ENCODE measurements at regions of chr2 and their contacts with region 1.

Region 1: GRCh38 chr2:120735746-120736170 is at the start of gene GLI2:
- DNase-seq: peak; percentile 63 to 85
- H3K4me3 ChIP-seq: peak within 1 kb of the TSS; percentile 63
- H3K27ac ChIP-seq: no peak within 1 kb of the TSS
- H3K4me1 ChIP-seq: peaks cover 15% of the 10 kb centered on the region
- H3K27me3 ChIP-seq: peaks cover 76% of the 10 kb centered on the region
- CTCF ChIP-seq: peak; percentile 79
- total RNA-seq, gene GLI2: 11.6 and 14.6 TPM in 2 replicates

Region 2: DNA sequence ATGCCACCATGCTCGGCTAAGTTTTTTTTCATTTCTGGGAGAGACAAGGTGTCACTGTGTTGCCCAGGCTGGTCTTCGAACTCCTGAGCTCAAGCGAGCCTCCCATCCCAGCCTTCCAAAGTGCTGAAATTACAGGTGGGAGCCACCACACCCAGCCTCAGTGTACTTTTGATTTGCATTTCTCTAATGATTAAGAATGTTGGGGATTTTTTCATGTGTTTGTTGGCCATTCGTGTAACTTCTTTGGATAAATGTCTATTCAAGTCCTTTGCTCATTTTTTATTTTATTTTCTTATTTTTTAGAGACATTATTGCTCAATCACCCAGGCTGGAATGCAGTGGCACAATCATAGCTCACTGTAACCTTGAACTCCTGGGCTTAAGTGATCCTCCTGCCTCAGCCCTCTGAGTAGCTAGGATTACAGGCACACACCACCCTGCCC is 585.7 kb before region 1 on chr2:
- CTCF ChIA-PET with region 1: no interaction called
- POLR2A ChIA-PET with region 1: no interaction called
- intact Hi-C with region 1: no loop called
- DNase-seq: no peak
- H3K4me3 ChIP-seq: no peak overlapping the region
- H3K27ac ChIP-seq: no peak overlapping the region
- H3K4me1 ChIP-seq: no peaks in the 10 kb centered on the region
- H3K27me3 ChIP-seq: no peaks in the 10 kb centered on the region
- CTCF ChIP-seq: no peak

Region 3: GRCh38 chr2:120771111-120771947 is 35.6 kb after region 1 on chr2:
- CTCF ChIA-PET with region 1: no interaction called
- POLR2A ChIA-PET with region 1: interaction called, 7 read pairs
- intact Hi-C with region 1: loop called (anchors 1 kb)
- DNase-seq: peak in 1 of 2 experiments; percentile 76
- H3K4me3 ChIP-seq: no peak overlapping the region
- H3K27ac ChIP-seq: no peak overlapping the region
- H3K4me1 ChIP-seq: no peaks in the 10 kb centered on the region
- H3K27me3 ChIP-seq: peaks cover 25% of the 10 kb centered on the region
- CTCF ChIP-seq: no peak

Region 4: GRCh38 chr2:120802158-120802557 is 66.4 kb after region 1 on chr2:
- CTCF ChIA-PET with region 1: no interaction called
- POLR2A ChIA-PET with region 1: no interaction called
- intact Hi-C with region 1: no loop called
- DNase-seq: no peak
- H3K4me3 ChIP-seq: no peak overlapping the region
- H3K27ac ChIP-seq: no peak overlapping the region
- H3K4me1 ChIP-seq: no peaks in the 10 kb centered on the region
- H3K27me3 ChIP-seq: 0 out of 2 replicates have a peak, but pooled peaks cover 11% of the 10 kb centered on the region
- CTCF ChIP-seq: no peak

Region 5: DNA sequence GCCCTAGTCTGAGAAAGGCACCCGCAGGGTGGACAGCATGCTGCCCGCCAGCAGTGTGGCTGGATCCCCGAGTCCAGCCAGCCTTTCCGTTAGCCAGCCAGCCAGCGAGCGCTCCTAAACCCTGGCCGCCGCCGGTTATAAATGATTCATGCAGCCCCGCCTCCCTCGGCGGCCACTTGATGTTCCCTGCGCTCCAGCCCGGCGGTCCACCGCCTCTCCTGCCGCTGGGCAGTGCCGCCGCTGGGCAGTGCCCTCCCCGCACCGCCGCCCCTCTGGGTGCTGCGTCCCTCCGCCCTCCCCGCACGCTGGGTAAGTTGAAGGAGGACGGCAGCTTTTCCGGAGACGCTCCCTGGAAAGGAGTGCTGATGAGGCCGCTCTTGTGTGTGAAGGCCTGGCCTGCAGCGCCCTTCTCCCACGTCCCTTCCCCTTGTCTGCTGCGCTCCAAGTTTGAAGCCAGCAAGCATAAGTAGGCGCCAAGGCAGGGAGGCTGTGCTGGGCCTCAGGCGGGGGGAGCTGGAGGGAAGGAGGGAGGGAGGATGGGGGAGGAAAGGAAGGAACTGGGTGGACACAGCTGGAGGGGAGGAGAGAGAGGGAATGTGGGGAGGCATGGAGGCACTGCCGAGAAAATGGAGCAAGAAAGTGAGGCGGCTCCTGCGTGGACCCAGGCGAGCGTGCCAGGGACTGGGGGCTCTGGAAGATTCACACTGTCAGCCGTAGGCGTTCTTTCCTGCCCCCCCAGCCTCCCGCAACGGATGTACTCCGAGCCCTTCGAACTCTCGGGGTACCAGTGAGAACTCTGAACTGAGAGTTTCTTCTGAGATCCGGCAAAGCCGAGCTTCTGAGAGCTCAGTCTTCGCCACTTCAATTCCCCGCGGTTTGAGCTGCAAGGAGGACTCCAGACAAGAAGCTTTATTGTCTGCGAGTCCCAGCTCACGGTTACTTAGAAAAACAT is 131.8 kb after region 1 on chr2:
- CTCF ChIA-PET with region 1: no interaction called
- POLR2A ChIA-PET with region 1: no interaction called
- intact Hi-C with region 1: loop called (anchors 5 kb)
- DNase-seq: peak in 1 of 2 experiments; percentile 74
- H3K4me3 ChIP-seq: no peak overlapping the region
- H3K27ac ChIP-seq: no peak overlapping the region
- H3K4me1 ChIP-seq: peaks cover 9% of the 10 kb centered on the region; the same call in 1 of the 2 replicates
- H3K27me3 ChIP-seq: peaks cover 52% of the 10 kb centered on the region
- CTCF ChIP-seq: no peak

Region 6: GRCh38 chr2:120949027-120949956 is 213.5 kb after region 1 on chr2:
- CTCF ChIA-PET with region 1: no interaction called
- POLR2A ChIA-PET with region 1: no interaction called
- intact Hi-C with region 1: loop called (anchors 2 kb)
- DNase-seq: peak in 1 of 2 experiments; percentile 33
- H3K4me3 ChIP-seq: no peak overlapping the region
- H3K27ac ChIP-seq: no peak overlapping the region
- H3K4me1 ChIP-seq: no peaks in the 10 kb centered on the region
- H3K27me3 ChIP-seq: no peaks in the 10 kb centered on the region
- CTCF ChIP-seq: peak; percentile 64

Region 7: GRCh38 chr2:121071034-121071504 is 335.3 kb after region 1 on chr2:
- CTCF ChIA-PET with region 1: no interaction called
- POLR2A ChIA-PET with region 1: interaction called, 5 read pairs
- intact Hi-C with region 1: loop called (anchors 1 kb)
- DNase-seq: peak in 1 of 2 experiments; percentile 84
- H3K4me3 ChIP-seq: no peak overlapping the region
- H3K27ac ChIP-seq: no peak overlapping the region
- H3K4me1 ChIP-seq: peaks cover 14% of the 10 kb centered on the region; the same call in 1 of the 2 replicates
- H3K27me3 ChIP-seq: peaks cover 17% of the 10 kb centered on the region
- CTCF ChIP-seq: peak; percentile 98

Measured in PC-9 (cell line).